MCF 10A (cell line): ENCODE measurements at regions of chr1 and their contacts with region 1.

Region 1: DNA sequence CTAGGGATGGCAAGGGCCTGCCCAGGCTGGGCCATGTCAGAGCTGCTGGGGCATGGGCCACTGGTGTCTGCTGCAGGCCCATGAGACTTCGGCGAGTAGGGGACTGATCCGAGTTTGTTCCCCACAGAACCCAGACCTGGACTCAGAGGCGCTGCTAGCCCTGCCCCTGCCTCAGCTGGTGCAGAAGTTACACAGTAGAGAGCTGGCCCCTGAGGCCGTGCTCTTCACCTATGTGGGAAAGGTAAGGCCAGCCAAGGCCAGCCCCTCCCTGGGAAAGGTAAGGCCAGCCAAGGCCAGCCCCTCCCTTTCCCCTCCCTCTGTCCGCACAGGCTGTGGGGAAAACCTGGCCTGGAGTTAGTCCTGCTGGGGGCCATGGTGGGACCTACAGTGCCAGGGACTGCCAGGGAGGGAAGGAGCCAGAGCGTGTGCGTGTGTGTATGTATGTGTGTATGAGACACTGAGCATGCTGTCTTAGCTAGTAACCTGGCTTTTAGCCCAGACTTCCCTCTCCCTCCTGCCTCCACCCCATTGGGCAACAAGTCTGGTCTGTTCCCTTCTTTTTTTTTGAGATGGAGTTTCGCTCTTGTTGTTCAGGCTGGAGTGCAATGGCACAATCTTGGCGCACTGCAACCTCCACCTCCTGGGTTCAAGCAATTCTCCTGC is 8.0 kb downstream of the FAAH start:
- DNase-seq: peak; percentile 97
- H3K4me3 Mint-ChIP-seq: peak overlapping the region; percentile 23
- H3K27ac Mint-ChIP-seq: no peak overlapping the region
- H3K4me1 Mint-ChIP-seq: peaks cover 7% of the 10 kb centered on the region
- H3K27me3 Mint-ChIP-seq: no peaks in the 10 kb centered on the region
- CTCF ChIP-seq: no peak

Region 2: GRCh38 chr1:46236882-46237281 is 165.2 kb before region 1 on chr1:
- CTCF ChIA-PET with region 1: no interaction called
- POLR2A ChIA-PET with region 1: no interaction called
- intact Hi-C with region 1: no loop called
- DNase-seq: no peak
- H3K4me3 Mint-ChIP-seq: no peak overlapping the region
- H3K27ac Mint-ChIP-seq: no peak overlapping the region
- H3K4me1 Mint-ChIP-seq: no peaks in the 10 kb centered on the region
- H3K27me3 Mint-ChIP-seq: no peaks in the 10 kb centered on the region
- CTCF ChIP-seq: no peak

Region 3: DNA sequence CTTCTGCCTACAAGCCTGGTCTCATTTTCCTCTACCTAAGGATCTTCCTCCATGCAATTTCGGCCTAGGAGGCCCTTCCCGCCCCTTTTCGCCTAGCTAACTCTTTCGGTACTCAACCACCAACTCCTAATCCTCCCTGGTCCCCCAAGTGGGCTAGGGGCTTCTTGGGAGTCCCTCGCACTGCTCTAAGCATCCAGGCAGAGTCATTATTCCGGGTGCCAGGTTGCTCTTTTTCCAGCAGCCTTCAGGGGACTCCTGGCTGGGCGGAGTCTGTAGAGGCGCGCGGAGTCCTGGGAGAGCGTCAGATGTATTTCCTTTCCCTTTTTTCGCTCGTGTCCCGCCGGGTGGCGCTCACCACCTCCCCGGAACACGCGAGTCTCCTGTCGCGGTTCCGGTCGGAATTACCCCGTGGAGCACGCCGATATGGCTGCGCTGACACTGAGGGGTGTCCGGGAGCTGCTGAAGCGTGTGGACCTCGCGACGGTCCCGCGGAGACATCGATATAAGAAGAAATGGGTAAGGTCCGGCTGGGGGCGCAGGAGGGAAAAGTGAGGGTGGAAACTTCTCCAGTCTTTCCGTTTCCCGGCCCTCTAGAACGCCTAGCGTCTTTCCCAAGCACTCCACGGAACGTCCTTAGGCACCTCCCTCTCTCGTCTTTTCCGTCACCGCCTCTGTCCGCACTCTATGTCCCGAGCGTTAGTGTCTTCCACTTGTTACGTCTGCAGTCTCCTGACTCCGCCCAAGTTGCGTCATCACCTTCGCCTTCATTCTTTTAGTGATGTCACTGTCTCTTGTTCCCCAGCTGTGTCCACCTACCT is 61.5 kb before region 1 on chr1 and contains the start of gene NSUN4:
- CTCF ChIA-PET with region 1: no interaction called
- POLR2A ChIA-PET with region 1: interaction called, 10 read pairs
- intact Hi-C with region 1: no loop called
- DNase-seq: peak; percentile 92
- H3K4me3 Mint-ChIP-seq: peak within 1 kb of the TSS; percentile 96
- H3K27ac Mint-ChIP-seq: peak within 1 kb of the TSS; percentile 99
- H3K4me1 Mint-ChIP-seq: peaks cover 26% of the 10 kb centered on the region
- H3K27me3 Mint-ChIP-seq: no peaks in the 10 kb centered on the region
- CTCF ChIP-seq: peak; percentile 75
- total RNA-seq, gene NSUN4: 27.4 and 28.4 TPM in 2 replicates

Region 4: DNA sequence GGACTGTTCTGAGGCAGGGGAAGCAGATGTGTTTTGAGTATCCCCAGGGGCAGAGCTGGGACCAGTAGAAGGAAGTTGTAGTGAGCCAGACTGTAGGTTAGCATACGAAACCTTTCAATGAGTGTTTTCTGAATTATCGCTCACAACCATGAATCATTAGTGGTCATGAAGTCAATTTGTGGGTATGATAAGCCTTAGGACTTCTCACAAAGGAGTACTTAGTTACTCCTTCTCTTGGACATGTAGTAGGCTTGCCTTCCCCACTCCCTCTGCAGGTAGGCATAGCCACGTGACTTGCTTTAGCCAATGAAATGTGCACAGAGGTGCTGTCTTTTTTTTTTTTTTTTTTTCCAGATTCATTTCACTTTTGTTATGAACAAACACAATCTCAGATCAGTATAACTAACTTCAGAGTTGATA is 31.9 kb before region 1 on chr1:
- CTCF ChIA-PET with region 1: interaction called, 4 read pairs
- POLR2A ChIA-PET with region 1: interaction called, 11 read pairs
- intact Hi-C with region 1: no loop called
- DNase-seq: no peak
- H3K4me3 Mint-ChIP-seq: no peak overlapping the region
- H3K27ac Mint-ChIP-seq: peak overlapping the region; percentile 6
- H3K4me1 Mint-ChIP-seq: peaks cover 6% of the 10 kb centered on the region
- H3K27me3 Mint-ChIP-seq: no peaks in the 10 kb centered on the region
- CTCF ChIP-seq: no peak

Region 5: GRCh38 chr1:46724991-46725735 is 323.1 kb after region 1 on chr1:
- CTCF ChIA-PET with region 1: interaction called, 4 read pairs
- POLR2A ChIA-PET with region 1: no interaction called
- intact Hi-C with region 1: loop called (anchors 10 kb)
- DNase-seq: peak; percentile 86
- H3K4me3 Mint-ChIP-seq: no peak overlapping the region
- H3K27ac Mint-ChIP-seq: no peak overlapping the region
- H3K4me1 Mint-ChIP-seq: peaks cover 15% of the 10 kb centered on the region
- H3K27me3 Mint-ChIP-seq: peaks cover 34% of the 10 kb centered on the region
- CTCF ChIP-seq: peak; percentile 72